Activated CD8-positive, alpha-beta T cell treated with anti-CD3 and anti-CD28 coated beads for 36 hours (primary cell): ENCODE measurements at regions of chr12 and their contacts with region 1.

Region 1: GRCh38 chr12:66860752-66861750 is 182.2 kb upstream of the GRIP1 start:
- DNase-seq: peak; percentile 76
- ATAC-seq: no peak
- H3K4me3 Mint-ChIP-seq: no peak overlapping the region
- H3K27ac Mint-ChIP-seq: no peak overlapping the region
- H3K4me1 Mint-ChIP-seq: peaks cover 17% of the 10 kb centered on the region
- H3K27me3 Mint-ChIP-seq: peaks cover 4% of the 10 kb centered on the region
- CTCF ChIP-seq: peak; percentile 97

Region 2: GRCh38 chr12:66688846-66689439 is 172.1 kb before region 1 on chr12:
- CTCF ChIA-PET with region 1: interaction called, 26 read pairs
- POLR2A ChIA-PET with region 1: no interaction called
- intact Hi-C with region 1: no loop called
- DNase-seq: peak; percentile 44
- ATAC-seq: no peak
- H3K4me3 Mint-ChIP-seq: no peak overlapping the region
- H3K27ac Mint-ChIP-seq: no peak overlapping the region
- H3K4me1 Mint-ChIP-seq: no peaks in the 10 kb centered on the region
- H3K27me3 Mint-ChIP-seq: peaks cover 4% of the 10 kb centered on the region
- CTCF ChIP-seq: peak; percentile 54

Region 3: DNA sequence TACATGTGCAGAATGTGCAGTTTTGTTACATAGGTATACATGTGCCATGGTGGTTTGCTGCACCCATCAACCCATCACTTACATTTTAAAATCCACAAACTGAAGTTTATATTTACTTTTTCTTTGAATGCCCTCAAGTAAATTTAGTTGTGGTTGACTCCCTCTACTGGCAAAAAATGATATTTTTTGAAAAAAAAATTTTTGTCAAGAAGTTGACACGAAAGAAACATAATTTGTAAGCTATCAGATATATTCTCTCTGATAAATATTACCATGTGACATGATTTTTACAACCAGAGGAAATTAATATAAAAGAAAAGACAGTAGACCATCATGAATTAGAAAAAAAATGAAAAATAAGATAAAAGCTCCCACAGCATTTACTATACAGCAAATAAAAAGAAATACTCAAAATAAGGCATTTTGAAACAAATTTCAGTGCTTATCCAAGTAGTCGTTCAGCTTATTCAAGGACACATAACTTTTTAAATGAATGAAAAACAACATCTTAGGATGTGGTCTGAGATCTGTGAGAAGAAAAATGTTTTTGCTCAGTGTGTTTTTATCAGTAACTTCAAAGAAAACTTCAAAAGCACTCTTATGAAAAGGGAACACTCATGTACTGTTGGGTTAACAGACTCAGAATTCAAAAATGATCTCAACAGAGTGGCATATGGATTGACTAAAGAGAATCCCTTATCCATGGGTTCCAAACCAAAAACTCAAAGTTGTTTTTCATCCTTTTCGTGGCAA is 152.2 kb before region 1 on chr12:
- CTCF ChIA-PET with region 1: interaction called, 18 read pairs
- POLR2A ChIA-PET with region 1: no interaction called
- intact Hi-C with region 1: loop called (anchors 5 kb)
- DNase-seq: no peak
- ATAC-seq: peak; percentile 30
- H3K4me3 Mint-ChIP-seq: peak overlapping the region; percentile 7
- H3K27ac Mint-ChIP-seq: peak overlapping the region; percentile 47
- H3K4me1 Mint-ChIP-seq: peaks cover 26% of the 10 kb centered on the region
- H3K27me3 Mint-ChIP-seq: no peaks in the 10 kb centered on the region
- CTCF ChIP-seq: peak; percentile 65

Region 4: DNA sequence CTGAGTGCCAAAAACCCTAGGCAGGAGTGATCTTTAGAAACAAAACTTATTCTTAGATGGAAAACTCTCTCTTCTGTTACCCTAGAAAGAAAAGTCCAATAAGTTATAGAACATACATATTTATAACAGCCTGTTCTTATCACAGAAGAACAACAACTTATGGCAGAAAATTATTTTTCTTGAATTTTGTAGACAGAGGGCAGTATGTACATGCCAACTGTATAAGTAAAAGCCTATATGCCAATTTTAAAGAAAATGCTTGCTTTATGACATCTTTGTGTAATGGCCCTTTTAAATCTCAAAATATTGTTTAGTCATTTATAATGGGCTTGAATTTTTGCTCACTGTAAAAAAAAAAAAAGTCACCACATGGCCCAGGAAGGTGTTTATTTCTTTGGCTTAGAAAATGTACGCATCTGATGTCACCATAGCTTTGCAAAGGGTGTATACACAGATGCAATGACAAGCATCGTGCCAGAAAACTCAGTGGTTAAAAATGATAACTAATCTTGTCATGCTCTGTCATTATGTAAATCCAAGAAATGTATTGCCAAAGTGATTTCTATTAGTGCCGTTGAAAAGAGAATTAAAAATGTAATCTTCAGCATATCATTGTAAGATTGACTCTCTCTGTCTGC is 143.9 kb before region 1 on chr12:
- CTCF ChIA-PET with region 1: interaction called, 4 read pairs
- POLR2A ChIA-PET with region 1: no interaction called
- intact Hi-C with region 1: loop called (anchors 5 kb)
- DNase-seq: no peak
- ATAC-seq: no peak
- H3K4me3 Mint-ChIP-seq: no peak overlapping the region
- H3K27ac Mint-ChIP-seq: no peak overlapping the region
- H3K4me1 Mint-ChIP-seq: peaks cover 26% of the 10 kb centered on the region
- H3K27me3 Mint-ChIP-seq: no peaks in the 10 kb centered on the region
- CTCF ChIP-seq: no peak

Region 5: DNA sequence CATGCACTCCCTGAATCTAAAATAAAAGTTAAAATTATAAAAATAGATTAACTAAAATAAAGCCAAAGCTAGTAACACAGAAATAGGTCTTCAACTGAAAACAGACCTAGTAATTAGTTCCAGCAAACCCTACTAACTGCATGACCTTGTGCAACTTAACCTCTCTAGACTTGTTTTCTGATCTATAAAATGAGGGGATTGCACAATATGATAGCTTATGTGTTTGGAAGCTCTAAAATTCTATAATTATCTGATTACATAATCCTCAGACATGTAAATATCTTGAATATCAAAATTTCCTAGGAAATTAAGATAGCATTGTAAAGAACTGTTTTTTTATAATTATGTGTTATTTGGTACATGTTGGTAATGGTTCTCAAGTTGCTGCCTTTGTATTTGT is 38.1 kb before region 1 on chr12:
- CTCF ChIA-PET with region 1: no interaction called
- POLR2A ChIA-PET with region 1: no interaction called
- intact Hi-C with region 1: no loop called
- DNase-seq: no peak
- ATAC-seq: no peak
- H3K4me3 Mint-ChIP-seq: no peak overlapping the region
- H3K27ac Mint-ChIP-seq: no peak overlapping the region
- H3K4me1 Mint-ChIP-seq: peaks cover 1% of the 10 kb centered on the region
- H3K27me3 Mint-ChIP-seq: no peaks in the 10 kb centered on the region
- CTCF ChIP-seq: no peak

Region 6: DNA sequence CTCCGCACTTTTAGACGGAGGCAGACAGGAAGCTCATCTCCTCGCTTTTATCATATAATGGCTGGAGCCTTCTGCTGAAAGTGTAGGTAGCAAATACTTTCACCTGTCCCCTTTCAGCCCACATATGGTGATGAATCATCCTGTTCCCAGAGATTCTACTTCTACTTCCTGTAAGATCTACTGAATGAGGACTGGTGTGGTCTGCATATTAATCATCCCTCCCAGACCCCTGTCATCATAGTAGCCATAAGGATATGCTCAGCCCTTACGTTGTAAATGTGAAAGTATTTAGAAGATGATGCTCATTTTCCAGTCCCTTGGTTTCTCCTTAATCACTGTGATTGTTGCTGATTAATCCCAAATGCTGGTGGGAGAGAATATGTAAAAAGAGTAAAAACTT is 86.1 kb after region 1 on chr12:
- CTCF ChIA-PET with region 1: no interaction called
- POLR2A ChIA-PET with region 1: no interaction called
- intact Hi-C with region 1: no loop called
- DNase-seq: peak; percentile 32
- ATAC-seq: peak; percentile 96
- H3K4me3 Mint-ChIP-seq: no peak overlapping the region
- H3K27ac Mint-ChIP-seq: no peak overlapping the region
- H3K4me1 Mint-ChIP-seq: peaks cover 7% of the 10 kb centered on the region
- H3K27me3 Mint-ChIP-seq: peaks cover 8% of the 10 kb centered on the region
- CTCF ChIP-seq: no peak